Upper lobe of right lung (tissue), 1 donor: ENCODE measurements at regions of chr10 and their contacts with region 1.

Region 1: GRCh38 chr10:7634142-7634894 is 32.4 kb downstream of the ITIH5 start:
- DNase-seq: no peak
- ATAC-seq: no peak
- H3K4me3 ChIP-seq: no peak overlapping the region
- H3K27ac ChIP-seq: peak overlapping the region; percentile 61
- H3K4me1 ChIP-seq: no peaks in the 10 kb centered on the region
- H3K27me3 ChIP-seq: no peaks in the 10 kb centered on the region
- CTCF ChIP-seq: no peak

Region 2: GRCh38 chr10:7457478-7458316 is 176.6 kb before region 1 on chr10:
- intact Hi-C with region 1: no loop called
- DNase-seq: no peak
- ATAC-seq: peak; percentile 81
- H3K4me3 ChIP-seq: no peak overlapping the region
- H3K27ac ChIP-seq: no peak overlapping the region
- H3K4me1 ChIP-seq: no peaks in the 10 kb centered on the region
- H3K27me3 ChIP-seq: no peaks in the 10 kb centered on the region
- CTCF ChIP-seq: no peak

Region 3: DNA sequence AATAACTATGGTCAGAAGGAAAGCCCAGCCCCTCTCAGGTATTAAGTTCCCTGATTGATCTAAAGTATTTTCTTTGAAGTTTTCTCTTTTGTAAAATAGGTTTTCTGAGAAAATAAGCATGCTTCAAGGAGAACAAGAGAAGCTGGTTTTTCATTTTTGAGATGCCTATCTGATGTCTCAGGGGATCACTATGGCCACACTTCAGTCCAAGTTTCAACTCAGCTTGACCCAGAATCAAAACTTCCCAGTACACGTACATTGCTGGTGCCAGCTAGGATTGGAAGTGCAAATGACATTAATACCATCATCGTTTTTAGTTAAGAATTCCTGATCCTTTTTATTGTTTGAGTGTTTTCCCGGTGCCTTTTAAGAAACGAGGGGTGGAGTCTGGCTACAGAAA is 25.2 kb after region 1 on chr10:
- intact Hi-C with region 1: loop called (anchors 2 kb)
- DNase-seq: no peak
- ATAC-seq: no peak
- H3K4me3 ChIP-seq: no peak overlapping the region
- H3K27ac ChIP-seq: no peak overlapping the region
- H3K4me1 ChIP-seq: no peaks in the 10 kb centered on the region
- H3K27me3 ChIP-seq: peaks cover 19% of the 10 kb centered on the region
- CTCF ChIP-seq: no peak

Region 4: GRCh38 chr10:7696545-7696944 is 62.2 kb after region 1 on chr10:
- intact Hi-C with region 1: no loop called
- DNase-seq: peak; percentile 85
- ATAC-seq: peak; percentile 97
- H3K4me3 ChIP-seq: no peak overlapping the region
- H3K27ac ChIP-seq: peak overlapping the region; percentile 24
- H3K4me1 ChIP-seq: no peaks in the 10 kb centered on the region
- H3K27me3 ChIP-seq: no peaks in the 10 kb centered on the region
- CTCF ChIP-seq: no peak